Panc1 (cell line): ENCODE measurements at regions of chr6 and their contacts with region 1.

Region 1: DNA sequence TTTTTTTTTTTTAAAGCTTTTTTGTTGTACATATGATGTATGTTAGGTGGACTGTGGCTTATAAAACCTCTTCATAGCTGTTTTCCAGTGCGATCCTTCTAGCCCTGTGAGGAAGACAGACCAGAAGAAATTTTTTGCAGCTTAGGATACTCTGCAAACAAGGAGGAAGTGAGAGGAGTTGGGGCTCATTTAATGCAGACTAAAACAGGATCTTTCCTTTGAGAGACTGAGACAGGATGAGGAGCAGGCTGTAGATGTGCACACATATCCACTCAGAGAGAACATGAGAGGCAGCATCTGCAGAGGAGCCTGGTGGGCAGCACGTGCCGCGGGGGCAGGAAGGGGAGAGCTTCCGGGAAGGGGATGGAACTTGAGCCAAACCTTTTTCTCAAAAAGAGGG is 45.7 kb downstream of the PPARD start:
- DNase-seq: no peak
- ATAC-seq: no peak
- H3K4me3 ChIP-seq: no peak overlapping the region
- H3K27ac ChIP-seq: no peak overlapping the region
- H3K4me1 ChIP-seq: peaks cover 10% of the 10 kb centered on the region
- H3K27me3 ChIP-seq: no peaks in the 10 kb centered on the region
- CTCF ChIP-seq: no peak

Region 2: GRCh38 chr6:35081426-35081851 is 306.6 kb before region 1 on chr6:
- CTCF ChIA-PET with region 1: no interaction called
- POLR2A ChIA-PET with region 1: no interaction called
- in situ Hi-C with region 1: no loop called
- intact Hi-C with region 1: no loop called
- DNase-seq: no peak
- ATAC-seq: no peak
- H3K4me3 ChIP-seq: no peak overlapping the region
- H3K27ac ChIP-seq: no peak overlapping the region
- H3K4me1 ChIP-seq: no peaks in the 10 kb centered on the region
- H3K27me3 ChIP-seq: no peaks in the 10 kb centered on the region
- CTCF ChIP-seq: no peak

Region 3: GRCh38 chr6:35093118-35093445 is 294.9 kb before region 1 on chr6:
- CTCF ChIA-PET with region 1: interaction called, 13 read pairs
- POLR2A ChIA-PET with region 1: no interaction called
- in situ Hi-C with region 1: no loop called
- intact Hi-C with region 1: no loop called
- DNase-seq: no peak
- ATAC-seq: no peak
- H3K4me3 ChIP-seq: no peak overlapping the region
- H3K27ac ChIP-seq: no peak overlapping the region
- H3K4me1 ChIP-seq: 0 out of 2 replicates have a peak, but pooled peaks cover 3% of the 10 kb centered on the region
- H3K27me3 ChIP-seq: no peaks in the 10 kb centered on the region
- CTCF ChIP-seq: no peak

Region 4: DNA sequence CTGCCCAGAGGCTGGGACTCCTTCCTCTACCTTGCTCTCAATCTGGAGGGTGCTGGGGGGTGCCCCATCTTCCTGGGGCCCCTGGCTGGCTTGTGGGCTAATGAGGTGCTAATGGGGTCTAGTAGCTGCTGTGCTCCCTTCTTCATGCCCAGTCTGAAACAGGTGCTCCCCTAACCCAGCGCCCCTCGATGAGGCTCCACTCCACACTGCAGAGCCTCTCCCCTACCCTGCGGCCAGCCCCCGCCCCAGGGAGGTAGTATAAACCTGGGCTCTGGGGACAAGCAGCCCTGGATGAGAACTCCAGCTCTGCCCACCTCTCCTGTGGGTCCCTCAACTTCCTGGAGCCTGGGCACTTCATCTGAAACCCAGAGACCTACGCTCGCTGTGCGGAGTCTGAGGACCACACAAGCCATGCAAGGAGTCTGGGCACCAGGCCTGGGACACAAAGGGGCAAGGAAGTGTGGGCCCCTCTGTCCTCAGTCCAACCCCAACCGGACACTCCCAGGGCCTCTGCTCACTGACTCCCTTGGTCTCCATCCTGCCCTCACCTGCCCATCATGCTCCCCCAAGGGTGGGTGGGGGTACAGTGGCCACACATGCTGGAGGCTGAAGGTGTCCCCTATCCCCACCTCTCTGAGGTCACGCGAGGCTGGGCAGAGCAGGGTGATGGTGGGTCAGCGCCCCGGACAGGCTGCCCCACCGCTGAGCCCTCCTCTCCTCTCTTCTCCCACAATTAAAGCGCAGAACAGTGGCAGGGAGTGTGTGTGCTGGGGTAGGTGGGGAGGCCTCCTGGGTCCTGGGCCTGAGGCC is 86.3 kb after region 1 on chr6:
- CTCF ChIA-PET with region 1: no interaction called
- POLR2A ChIA-PET with region 1: no interaction called
- in situ Hi-C with region 1: no loop called
- intact Hi-C with region 1: no loop called
- DNase-seq: no peak
- ATAC-seq: peak; percentile 66
- H3K4me3 ChIP-seq: no peak overlapping the region
- H3K27ac ChIP-seq: no peak overlapping the region
- H3K4me1 ChIP-seq: peaks cover 36% of the 10 kb centered on the region
- H3K27me3 ChIP-seq: no peaks in the 10 kb centered on the region
- CTCF ChIP-seq: no peak